BJ (cell line): ENCODE measurements at regions of chr7 and their contacts with region 1.

Region 1: DNA sequence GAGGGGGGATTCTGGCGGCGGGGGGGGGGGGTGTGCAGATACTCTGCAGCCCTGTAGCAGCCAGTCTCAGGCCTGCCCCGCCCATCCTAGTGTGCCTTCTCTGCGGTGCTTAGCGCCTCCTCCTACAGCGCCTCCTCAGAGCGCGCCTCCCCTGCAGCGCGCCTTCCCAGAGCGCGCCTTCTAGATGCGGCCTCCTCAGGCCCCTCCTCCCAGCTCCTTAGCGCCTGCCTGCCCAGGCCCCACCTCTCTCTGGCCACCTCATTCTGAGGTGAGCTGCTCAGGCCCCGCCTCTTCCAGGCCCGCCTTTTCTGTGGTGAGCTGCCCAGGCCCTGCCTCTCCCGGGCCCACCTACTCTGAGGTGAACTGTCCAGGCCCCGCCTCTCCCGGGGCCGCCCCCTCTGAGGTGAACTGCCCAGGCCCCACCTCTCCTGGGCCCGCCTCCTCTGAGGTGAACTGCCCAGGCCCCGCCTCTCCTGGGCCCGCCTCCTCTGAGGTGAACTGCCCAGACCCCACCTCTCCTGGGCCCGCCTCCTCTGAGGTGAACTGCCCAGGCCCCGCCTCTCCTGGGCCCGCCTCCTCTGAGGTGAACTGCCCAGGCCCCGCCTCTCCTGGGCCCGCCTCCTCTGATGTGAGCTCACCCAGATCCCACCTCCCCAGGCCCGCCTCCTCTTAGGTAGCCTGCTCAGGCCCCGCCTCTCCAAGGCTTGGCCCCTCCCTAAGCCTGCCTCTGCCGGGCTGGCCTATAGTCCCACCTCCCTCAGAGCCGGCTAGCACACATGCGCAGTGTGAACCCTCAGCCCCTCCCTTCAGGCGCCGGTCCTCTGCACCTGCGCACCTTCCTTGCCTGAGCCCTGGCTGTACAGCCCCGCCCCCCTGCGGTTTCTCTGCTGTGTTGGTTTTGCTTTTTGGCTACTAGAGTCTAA is 2.1 kb upstream of the SGCE start:
- DNase-seq: peak; percentile 58
- H3K4me3 ChIP-seq: peak overlapping the region; percentile 63
- H3K27me3 ChIP-seq: no peaks in the 10 kb centered on the region
- CTCF ChIP-seq: no peak

Region 2: DNA sequence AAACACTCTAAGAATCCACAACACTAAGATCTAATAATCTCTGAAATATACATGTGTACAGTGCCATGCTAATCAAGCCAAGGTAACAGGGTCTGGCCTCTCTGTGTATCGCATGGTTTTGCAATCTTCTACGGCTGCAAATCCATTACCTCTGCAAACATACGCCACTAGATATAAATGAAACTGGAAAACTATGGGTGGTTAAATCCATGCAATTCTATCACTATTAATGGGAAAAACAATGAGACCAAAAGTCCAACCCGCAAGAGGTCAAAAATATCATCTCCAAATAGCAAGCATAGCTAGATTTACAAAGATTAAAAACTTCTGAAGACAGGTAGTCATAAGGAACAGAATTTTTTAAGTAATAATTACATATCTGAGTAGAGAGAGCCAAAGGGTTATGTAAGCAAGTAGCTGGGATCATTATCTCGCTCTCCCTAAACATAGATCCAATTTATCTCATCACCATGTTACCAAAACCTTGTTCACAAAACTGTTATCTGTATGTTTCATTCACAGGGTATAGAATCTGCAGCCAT is 24.9 kb before region 1 on chr7:
- CTCF ChIA-PET with region 1: interaction called, 11 read pairs
- POLR2A ChIA-PET with region 1: no interaction called
- DNase-seq: no peak
- H3K4me3 ChIP-seq: no peak overlapping the region
- H3K27me3 ChIP-seq: no peaks in the 10 kb centered on the region
- CTCF ChIP-seq: no peak

Region 3: GRCh38 chr7:94647295-94647694 is 10.7 kb before region 1 on chr7:
- CTCF ChIA-PET with region 1: interaction called, 11 read pairs
- POLR2A ChIA-PET with region 1: no interaction called
- DNase-seq: no peak
- H3K4me3 ChIP-seq: no peak overlapping the region
- H3K27me3 ChIP-seq: no peaks in the 10 kb centered on the region
- CTCF ChIP-seq: no peak

Region 4: DNA sequence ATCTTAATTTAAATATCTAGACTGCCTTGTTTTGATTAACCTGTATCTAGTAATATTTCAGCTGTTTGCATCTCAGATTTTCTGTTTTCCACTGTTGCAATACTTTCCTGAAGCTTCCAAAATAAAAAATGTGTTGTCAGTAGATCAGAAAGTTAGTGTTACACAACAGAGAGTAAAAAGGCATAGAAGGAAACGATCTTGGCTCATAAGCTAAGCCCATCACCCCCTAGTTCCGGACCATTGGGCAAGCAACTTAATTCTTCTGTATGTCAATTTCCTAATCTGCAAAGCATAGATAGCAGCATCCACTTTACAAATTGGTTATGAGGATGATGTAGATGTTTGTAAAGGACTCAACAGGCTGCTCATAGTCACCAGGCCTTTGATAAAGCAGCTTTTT is 733.7 kb after region 1 on chr7:
- CTCF ChIA-PET with region 1: no interaction called
- POLR2A ChIA-PET with region 1: no interaction called
- DNase-seq: no peak
- H3K4me3 ChIP-seq: no peak overlapping the region
- H3K27me3 ChIP-seq: no peaks in the 10 kb centered on the region
- CTCF ChIP-seq: no peak